Astrocyte of the cerebellum (primary cell): ENCODE measurements at regions of chr3 and their contacts with region 1.

Region 1: DNA sequence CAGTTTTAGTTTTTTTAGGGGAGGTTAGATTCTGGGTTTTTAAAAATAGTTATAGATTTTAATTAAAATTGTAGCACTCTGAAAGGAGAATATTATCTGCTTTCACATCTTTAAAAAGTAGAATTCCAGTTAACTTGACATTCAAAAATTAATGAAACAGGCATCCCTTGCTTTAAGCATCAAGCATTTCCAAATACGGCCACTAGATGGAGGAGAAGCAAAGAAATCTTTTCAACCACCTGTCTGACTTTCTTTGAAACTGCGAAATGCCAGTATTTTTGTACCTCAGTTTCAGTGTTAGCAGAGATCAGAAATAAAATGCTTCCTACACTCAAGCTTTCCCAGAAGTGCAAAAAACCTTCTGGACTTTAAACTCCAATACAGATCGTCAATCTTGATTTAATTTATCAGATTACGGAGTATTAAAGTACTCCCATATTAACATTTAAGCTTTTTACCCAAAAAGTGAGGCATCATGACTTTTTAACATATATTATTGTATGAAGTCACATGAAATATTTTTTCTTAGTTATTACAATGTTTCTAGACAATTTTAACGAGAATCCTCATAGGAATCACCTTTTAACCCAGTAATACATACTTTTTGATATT is 153.3 kb downstream of the P3H2 start:
- DNase-seq: peak; percentile 55
- H3K4me3 ChIP-seq: no peak overlapping the region
- CTCF ChIP-seq: peak; percentile 70

Region 2: GRCh38 chr3:189927975-189928895 is 39.1 kb before region 1 on chr3:
- in situ Hi-C with region 1: no loop called
- DNase-seq: no peak
- H3K4me3 ChIP-seq: no peak overlapping the region
- CTCF ChIP-seq: no peak

Region 3: GRCh38 chr3:190319660-190320059 is 352.3 kb after region 1 on chr3:
- in situ Hi-C with region 1: loop called (anchors 5 kb)
- DNase-seq: no peak
- H3K4me3 ChIP-seq: no peak overlapping the region
- CTCF ChIP-seq: no peak